Caco-2 (cell line): ENCODE measurements at regions of chr1 and their contacts with region 1.

Region 1: DNA sequence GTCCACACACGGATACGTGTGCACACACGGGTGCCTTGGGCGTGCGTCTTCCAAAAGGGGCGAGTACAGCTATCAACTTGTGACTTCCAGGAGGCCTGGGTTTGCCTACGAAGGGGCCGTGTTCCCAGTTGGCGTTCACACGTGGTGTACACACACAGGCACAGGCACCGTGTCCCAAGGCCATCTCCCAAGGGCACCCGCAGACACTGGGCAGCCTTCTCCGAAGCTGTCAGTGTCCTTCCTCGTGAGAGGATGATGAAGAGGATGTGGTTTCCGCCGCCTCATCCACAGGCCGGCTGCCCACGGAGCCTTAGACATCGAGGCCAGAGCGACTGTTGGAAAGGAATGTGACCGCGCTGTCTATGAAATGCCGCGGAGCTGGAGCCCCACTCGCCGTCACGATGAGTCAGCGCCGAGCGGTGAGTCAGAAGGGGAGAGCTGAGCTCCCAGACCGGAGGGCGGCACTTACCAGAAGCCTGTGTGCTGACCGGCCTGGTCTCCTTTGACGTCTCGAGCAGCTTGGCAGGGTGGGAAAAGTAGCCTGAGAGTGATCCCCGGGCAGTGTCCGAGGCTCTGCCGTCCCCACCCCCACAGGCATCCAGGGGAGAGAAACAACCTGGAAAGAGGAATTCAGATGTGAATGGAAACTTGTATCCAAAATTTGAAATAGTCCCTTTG is 141.4 kb upstream of the ARHGEF16 start:
- DNase-seq: peak; percentile 76 to 88
- H3K4me3 ChIP-seq: no peak overlapping the region
- H3K4me3 Mint-ChIP-seq: no peak overlapping the region
- H3K27ac Mint-ChIP-seq: peak overlapping the region; percentile 84
- H3K4me1 ChIP-seq: peaks cover 19% of the 10 kb centered on the region
- H3K4me1 Mint-ChIP-seq: peaks cover 16% of the 10 kb centered on the region
- H3K27me3 ChIP-seq: no peaks in the 10 kb centered on the region
- H3K27me3 Mint-ChIP-seq: no peaks in the 10 kb centered on the region
- CTCF ChIP-seq: no peak

Region 2: DNA sequence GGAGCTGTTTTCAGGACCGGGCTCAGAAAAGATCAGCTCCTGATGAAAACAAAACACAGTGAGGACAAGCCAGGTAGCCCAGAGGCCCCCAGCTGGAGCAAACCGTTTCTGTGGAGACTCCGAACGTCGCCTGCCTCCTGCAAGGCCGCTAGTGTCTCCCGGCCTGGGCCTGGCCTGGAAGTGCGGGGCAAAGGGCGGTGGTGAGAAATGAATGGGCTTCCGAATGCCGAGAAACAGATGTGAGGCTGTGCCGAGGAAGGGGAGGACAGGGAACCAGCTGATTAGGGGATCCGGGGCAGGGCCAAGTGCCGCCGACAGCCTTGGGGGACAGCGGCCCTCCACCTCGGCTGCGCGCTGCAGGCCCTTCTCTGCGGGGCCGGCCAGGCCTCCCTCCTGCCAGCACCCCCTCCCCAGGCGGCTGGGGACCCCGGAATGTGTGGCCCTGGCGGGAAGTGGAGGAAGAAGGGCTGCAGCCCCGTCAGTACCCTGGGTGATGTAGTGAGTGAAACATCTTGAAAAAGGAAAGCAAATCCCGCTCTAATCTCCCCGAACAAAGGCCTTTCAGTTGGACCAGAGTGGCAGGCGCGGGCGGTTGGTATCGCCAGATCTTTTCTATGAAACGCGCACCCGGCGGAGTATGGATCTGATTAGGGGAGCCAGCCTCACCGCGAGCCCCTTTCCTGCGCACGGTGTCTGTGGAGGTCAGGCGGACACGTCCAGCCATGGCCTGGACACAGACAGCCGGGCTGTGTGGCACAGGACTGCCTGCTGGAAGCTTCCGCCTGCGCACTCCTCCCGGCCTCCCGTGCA is 191.4 kb before region 1 on chr1:
- CTCF ChIA-PET with region 1: no interaction called
- POLR2A ChIA-PET with region 1: interaction called, 11 read pairs
- intact Hi-C with region 1: no loop called
- DNase-seq: no peak
- H3K4me3 ChIP-seq: no peak overlapping the region
- H3K4me3 Mint-ChIP-seq: no peak overlapping the region
- H3K27ac Mint-ChIP-seq: no peak overlapping the region
- H3K4me1 ChIP-seq: no peaks in the 10 kb centered on the region
- H3K4me1 Mint-ChIP-seq: no peaks in the 10 kb centered on the region
- H3K27me3 ChIP-seq: no peaks in the 10 kb centered on the region
- H3K27me3 Mint-ChIP-seq: no peaks in the 10 kb centered on the region
- CTCF ChIP-seq: no peak

Region 3: DNA sequence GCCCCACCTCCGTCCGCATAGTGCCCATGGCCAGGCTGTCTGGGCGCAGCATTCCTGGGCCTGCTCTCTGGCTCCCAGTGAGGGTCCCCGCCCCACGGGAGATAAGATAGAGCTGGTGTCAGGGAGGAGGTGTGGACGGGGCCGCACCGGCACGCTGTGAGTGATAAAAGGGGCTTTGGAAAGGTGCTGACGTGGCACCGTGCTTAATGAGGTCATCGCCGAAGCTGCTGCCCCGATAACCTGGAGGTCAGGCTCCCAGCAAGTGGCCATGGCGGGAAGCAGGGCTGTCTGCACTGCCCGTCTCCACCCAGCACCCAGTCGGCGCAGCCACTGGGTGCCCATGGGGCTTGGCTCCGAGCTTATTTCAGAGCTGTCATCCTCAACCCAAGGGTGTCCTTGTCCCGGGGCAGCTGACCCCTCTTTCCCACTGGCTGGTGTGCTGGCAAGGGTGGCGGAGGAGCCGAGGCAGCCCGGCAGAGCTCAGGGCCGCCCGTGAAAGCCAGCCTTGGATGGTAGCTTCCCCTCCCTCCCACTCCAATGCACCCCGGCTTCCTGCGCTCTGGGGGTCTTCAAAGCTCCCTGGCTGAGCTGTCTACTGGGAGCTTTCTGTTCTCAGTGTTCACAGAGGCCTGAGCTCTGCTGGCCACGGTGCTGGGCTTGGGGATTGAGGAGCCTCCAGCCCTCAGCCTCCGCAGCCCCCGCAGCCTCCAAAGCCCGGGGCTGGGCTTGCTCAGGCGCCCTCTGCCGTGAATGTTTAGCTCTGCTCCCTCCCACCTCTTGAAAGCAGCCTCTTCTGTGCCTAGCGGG is 36.3 kb after region 1 on chr1:
- CTCF ChIA-PET with region 1: no interaction called
- POLR2A ChIA-PET with region 1: no interaction called
- intact Hi-C with region 1: no loop called
- DNase-seq: peak in 1 of 2 experiments; percentile 55
- H3K4me3 ChIP-seq: no peak overlapping the region
- H3K4me3 Mint-ChIP-seq: no peak overlapping the region
- H3K27ac Mint-ChIP-seq: no peak overlapping the region
- H3K4me1 ChIP-seq: peaks cover 14% of the 10 kb centered on the region
- H3K4me1 Mint-ChIP-seq: no peaks in the 10 kb centered on the region
- H3K27me3 ChIP-seq: no peaks in the 10 kb centered on the region
- H3K27me3 Mint-ChIP-seq: no peaks in the 10 kb centered on the region
- CTCF ChIP-seq: no peak

Region 4: DNA sequence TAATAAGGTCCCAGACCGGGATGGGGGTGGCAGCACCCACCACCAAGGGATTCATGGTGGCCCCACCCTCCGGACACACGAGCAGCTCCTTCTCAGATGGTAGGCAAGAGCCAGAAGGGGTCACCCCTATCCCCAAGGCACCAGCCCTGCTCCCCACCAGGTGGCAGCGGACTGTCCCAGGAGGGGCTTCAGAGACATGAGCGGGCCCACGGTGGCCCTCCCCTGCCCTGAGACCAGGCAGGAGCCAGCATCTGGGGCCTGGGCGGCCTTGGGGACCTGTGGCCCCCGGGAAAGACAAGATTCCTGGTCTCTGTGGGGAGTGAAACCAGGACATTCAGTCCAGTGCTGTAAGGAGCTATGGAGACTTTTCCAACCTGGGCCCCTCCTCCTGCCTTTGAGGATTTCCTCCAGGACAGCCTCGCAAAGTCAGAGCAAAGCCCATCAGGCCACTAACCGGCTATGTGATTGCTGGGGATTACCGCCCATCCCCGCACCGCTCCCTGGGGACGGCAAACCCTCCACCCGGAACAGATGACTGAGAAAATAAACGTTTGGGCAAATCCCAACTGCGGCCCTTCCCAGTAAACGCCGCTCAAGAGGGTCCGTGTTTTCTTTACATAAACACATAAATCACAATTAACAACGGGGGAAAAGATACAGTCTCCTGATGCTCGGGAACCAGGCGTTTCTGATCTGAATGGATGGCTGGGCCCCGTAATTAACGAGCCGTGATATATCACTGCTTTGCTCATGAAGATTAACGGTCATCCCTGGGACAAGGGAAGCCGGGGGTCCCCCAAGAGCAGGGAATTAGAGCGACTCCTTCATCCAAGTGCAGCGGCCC is 90.6 kb after region 1 on chr1:
- CTCF ChIA-PET with region 1: no interaction called
- POLR2A ChIA-PET with region 1: no interaction called
- intact Hi-C with region 1: no loop called
- DNase-seq: peak in 1 of 2 experiments; percentile 13
- H3K4me3 ChIP-seq: no peak overlapping the region
- H3K4me3 Mint-ChIP-seq: no peak overlapping the region
- H3K27ac Mint-ChIP-seq: no peak overlapping the region
- H3K4me1 ChIP-seq: no peaks in the 10 kb centered on the region
- H3K4me1 Mint-ChIP-seq: no peaks in the 10 kb centered on the region
- H3K27me3 ChIP-seq: no peaks in the 10 kb centered on the region
- H3K27me3 Mint-ChIP-seq: no peaks in the 10 kb centered on the region
- CTCF ChIP-seq: peak; percentile 25 to 36

Region 5: DNA sequence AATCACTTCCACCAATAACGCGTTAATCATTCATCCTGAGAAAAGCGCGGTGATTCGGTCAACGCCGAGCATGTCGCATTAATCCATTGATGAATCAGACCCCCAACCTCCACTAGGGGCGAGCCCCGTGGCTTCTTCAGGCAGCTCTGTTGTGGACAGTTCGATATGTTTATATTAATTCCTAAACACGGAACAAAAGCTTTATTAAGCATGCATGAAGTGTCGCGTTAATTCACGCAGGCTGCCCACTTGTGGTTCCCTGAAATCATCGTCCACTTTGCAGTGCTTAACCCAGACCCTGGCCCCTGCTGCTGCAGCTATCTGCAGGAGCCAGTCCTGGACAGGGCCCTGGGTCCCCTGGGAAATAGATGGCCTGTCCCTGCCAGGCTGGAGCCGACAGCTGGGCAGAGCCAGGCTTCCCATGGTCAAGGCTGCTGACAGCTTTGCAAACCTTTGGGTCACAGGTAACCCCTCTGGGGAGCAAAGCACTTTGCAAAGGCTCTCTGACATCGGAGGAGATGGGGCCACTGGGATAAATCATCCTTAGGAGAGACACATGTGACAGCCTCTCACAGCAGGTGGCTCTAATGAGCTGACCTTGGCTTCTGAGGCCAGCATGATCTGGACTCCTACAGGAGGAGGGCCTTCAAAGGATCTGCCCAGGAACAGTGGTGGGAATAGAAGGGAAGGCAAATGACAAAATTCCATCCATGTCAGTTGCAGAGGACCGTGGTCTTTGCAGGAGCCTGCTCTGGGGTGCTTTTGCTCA is 1204.3 kb after region 1 on chr1:
- CTCF ChIA-PET with region 1: no interaction called
- POLR2A ChIA-PET with region 1: no interaction called
- intact Hi-C with region 1: no loop called
- DNase-seq: no peak
- H3K4me3 ChIP-seq: no peak overlapping the region
- H3K4me3 Mint-ChIP-seq: no peak overlapping the region
- H3K27ac Mint-ChIP-seq: no peak overlapping the region
- H3K4me1 ChIP-seq: no peaks in the 10 kb centered on the region
- H3K4me1 Mint-ChIP-seq: no peaks in the 10 kb centered on the region
- H3K27me3 ChIP-seq: no peaks in the 10 kb centered on the region
- H3K27me3 Mint-ChIP-seq: peaks cover 10% of the 10 kb centered on the region
- CTCF ChIP-seq: no peak